ENCODE measurements at regions of chr15 and their contacts with region 1.

Region 1: DNA sequence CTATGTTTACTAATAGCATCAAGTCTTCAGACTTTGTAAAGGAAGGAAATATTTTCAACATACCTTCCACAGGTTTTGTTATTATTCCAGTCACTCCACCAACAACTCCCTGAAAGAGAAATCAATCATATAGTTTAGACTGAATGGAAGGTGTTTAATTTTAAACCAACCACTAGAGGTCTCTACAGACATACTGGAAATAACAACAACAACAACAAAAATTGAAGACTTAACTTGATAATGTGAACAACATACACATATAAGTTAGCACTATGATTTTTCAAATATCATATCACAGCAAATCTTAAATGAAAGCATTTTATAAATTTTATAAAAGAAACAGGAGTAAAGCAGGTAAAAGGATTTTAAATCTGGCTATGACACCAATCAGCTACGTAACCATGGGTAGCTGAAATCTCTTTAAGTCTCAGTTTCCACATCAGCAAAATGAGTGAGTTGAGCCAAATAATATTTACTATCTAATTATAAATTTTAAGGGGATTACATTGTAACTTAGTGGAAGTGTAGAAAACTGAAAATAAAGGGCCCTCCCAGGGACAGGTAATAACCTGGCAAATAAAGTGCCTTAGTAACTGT is 188.2 kb downstream of the VPS13C start:
- DNase-seq: no peak
- ATAC-seq: no peak
- H3K4me3 Mint-ChIP-seq: no peak overlapping the region
- H3K27ac Mint-ChIP-seq: no peak overlapping the region
- H3K4me1 Mint-ChIP-seq: no peaks in the 10 kb centered on the region
- H3K27me3 Mint-ChIP-seq: no peaks in the 10 kb centered on the region

Region 2: GRCh38 chr15:62138124-62138523 is 266.1 kb after region 1 on chr15:
- CTCF ChIA-PET with region 1: no interaction called
- POLR2A ChIA-PET with region 1: no interaction called
- intact Hi-C with region 1: loop called (anchors 10 kb)
- DNase-seq: no peak
- ATAC-seq: no peak
- H3K4me3 Mint-ChIP-seq: no peak overlapping the region
- H3K27ac Mint-ChIP-seq: no peak overlapping the region
- H3K4me1 Mint-ChIP-seq: no peaks in the 10 kb centered on the region
- H3K27me3 Mint-ChIP-seq: peaks cover 3% of the 10 kb centered on the region

Region 3: GRCh38 chr15:62306851-62307504 is 435.0 kb after region 1 on chr15:
- CTCF ChIA-PET with region 1: no interaction called
- POLR2A ChIA-PET with region 1: no interaction called
- intact Hi-C with region 1: loop called in 1 of 2 experiments (anchors 2 kb)
- DNase-seq: peak; percentile 33
- ATAC-seq: no peak
- H3K4me3 Mint-ChIP-seq: no peak overlapping the region
- H3K27ac Mint-ChIP-seq: no peak overlapping the region
- H3K4me1 Mint-ChIP-seq: peaks cover 5% of the 10 kb centered on the region
- H3K27me3 Mint-ChIP-seq: peaks cover 37% of the 10 kb centered on the region

Measured in activated CD4-positive, alpha-beta T cell treated with anti-CD3 and anti-CD28 coated beads for 36 hours (primary cell).